A549 (cell line): ENCODE measurements at regions of chr2 and their contacts with region 1.

Region 1: GRCh38 chr2:127591221-127591923 is 54.6 kb upstream of the GPR17 start:
- DNase-seq: peak; percentile 72 to 74
- ATAC-seq: peak; percentile 90 to 99
- H3K4me3 ChIP-seq: no peak overlapping the region
- H3K27ac ChIP-seq: peak overlapping the region in 1 of 2 experiments; percentile 61; a peak in 2 of 6 replicates
- H3K4me1 ChIP-seq: no peaks in the 10 kb centered on the region
- CTCF ChIP-seq: peak; percentile 91
- EP300 ChIP-seq: no peak
- POLR2A ChIP-seq: no peak
- RAD21 ChIP-seq: peak; percentile 86 to 96

Region 2: DNA sequence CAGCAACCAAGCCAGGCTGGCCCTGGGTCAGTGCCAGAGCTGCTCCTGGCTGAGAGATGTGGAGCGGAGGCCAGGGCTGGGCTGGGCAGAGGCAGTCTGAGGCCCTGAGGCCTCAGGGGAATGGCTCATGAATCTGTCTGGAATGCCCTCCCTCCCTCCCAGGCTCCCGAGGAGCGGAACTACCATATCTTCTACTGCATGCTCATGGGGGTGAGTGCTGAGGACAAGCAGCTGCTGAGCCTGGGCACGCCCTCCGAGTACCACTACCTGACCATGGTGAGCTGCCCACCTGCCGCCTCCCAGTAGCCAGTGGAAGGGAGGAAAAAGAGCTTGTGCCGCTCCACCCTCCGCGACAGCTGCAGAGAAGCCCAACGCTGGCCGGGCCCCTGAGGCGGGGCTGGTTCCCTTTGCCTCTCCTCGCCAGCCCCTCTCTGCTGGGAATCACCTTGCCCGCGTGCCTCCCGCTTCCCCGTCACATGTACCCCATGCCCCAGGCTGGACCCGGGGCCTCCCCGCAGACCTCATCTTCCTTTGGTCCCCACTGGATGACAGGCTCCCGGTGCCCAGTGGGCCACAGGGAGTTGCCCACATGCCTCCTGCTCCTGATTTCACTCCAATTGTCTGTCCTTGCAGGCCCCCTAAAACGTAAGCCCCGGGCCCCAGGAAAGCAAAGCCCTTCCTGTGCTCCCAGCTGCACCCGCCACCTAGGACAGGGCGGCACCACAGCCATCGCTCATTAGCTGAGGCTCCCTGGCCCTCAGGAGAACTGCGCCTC is 14.8 kb before region 1 on chr2:
- CTCF ChIA-PET with region 1: interaction called, 15 read pairs
- POLR2A ChIA-PET with region 1: no interaction called
- DNase-seq: no peak
- ATAC-seq: peak in 1 of 2 experiments; percentile 46; a peak in 3 of 6 replicates
- H3K4me3 ChIP-seq: no peak overlapping the region
- H3K27ac ChIP-seq: no peak overlapping the region
- H3K4me1 ChIP-seq: no peaks in the 10 kb centered on the region
- CTCF ChIP-seq: no peak
- EP300 ChIP-seq: no peak
- POLR2A ChIP-seq: no peak
- RAD21 ChIP-seq: no peak